ENCODE measurements at regions of chr12 and their contacts with region 1.

Region 1: DNA sequence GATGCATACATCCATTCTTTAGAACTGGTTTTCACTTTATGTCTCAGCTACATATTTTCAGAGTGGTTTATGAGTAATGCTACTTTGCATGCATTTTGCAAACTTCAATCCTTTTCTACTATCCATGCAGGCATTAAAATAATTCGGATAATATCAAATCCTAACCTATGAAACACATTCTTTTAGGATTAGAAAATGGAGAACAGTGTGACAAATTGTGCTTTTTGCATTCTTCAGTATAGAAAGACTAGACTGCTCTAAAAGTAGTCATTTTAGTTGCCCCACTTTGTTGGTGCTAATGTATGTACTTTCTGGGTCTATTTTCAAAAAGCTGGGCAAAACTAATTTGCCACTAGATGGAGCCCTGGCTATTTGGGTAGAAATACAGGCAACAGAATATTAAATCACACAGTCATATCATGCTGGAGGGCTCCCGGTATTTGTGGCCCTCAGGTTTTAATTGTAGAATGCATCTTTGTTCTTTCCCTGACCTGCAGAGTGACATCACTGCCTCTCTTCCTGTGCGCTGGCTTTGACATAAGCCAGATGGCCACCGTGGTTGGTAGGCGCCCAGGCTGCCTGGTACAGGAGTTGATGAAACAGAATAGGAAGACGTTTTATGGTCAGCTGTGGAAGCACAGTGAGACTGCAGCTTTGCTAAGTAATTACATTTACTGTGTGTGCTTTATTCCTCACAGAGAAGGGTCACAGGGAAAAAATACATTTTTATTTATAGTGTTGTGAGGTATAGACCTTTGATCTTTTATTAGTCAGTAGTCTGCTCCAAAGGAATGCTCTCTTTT is 28.1 kb downstream of the MSRB3 start:
- DNase-seq: peak; percentile 93
- H3K4me3 ChIP-seq: no peak overlapping the region
- H3K27ac ChIP-seq: peak overlapping the region; percentile 21 to 77 (median 69)
- H3K4me1 ChIP-seq: peaks cover 0 to 82% (median 61%) of the 10 kb centered on the region in 4 donors
- H3K27me3 ChIP-seq: no peaks in the 10 kb centered on the region
- CTCF ChIP-seq: peak in 3 of 4 experiments; percentile 16 to 28 (median 20)
- EP300 ChIP-seq: peak in 1 of 4 donors; percentile 81
- POLR2A ChIP-seq: no peak

Region 2: GRCh38 chr12:64864319-64864718 is 442.2 kb before region 1 on chr12:
- intact Hi-C with region 1: no loop called
- DNase-seq: no peak
- H3K4me3 ChIP-seq: no peak overlapping the region
- H3K27ac ChIP-seq: no peak overlapping the region
- H3K4me1 ChIP-seq: no peaks in the 10 kb centered on the region
- H3K27me3 ChIP-seq: no peaks in the 10 kb centered on the region
- CTCF ChIP-seq: no peak
- EP300 ChIP-seq: no peak
- POLR2A ChIP-seq: no peak

Region 3: DNA sequence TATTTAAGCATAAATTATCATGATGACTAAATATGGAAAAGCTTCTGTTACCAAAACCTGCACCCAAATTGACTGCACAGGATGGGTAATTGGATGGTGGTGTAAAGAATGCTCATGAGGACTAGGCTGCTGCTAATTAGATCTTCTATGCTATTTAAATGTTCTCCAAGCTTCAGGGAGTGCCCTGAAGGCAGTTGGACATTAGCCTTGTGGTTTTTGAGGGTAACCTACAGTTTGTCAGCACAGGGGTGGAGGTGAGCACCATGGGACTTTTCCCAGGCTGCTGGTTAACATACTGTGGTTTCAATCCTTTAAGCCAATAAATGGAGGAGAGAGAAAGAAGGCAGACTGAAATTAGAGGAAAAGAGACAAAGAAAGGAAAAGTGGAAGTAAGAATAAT is 330.4 kb before region 1 on chr12:
- intact Hi-C with region 1: no loop called
- DNase-seq: no peak
- H3K4me3 ChIP-seq: no peak overlapping the region
- H3K27ac ChIP-seq: no peak overlapping the region
- H3K4me1 ChIP-seq: no peaks in the 10 kb centered on the region
- H3K27me3 ChIP-seq: no peaks in the 10 kb centered on the region
- CTCF ChIP-seq: no peak
- EP300 ChIP-seq: no peak
- POLR2A ChIP-seq: no peak

Region 4: GRCh38 chr12:65022960-65023359 is 283.6 kb before region 1 on chr12:
- intact Hi-C with region 1: no loop called
- DNase-seq: no peak
- H3K4me3 ChIP-seq: no peak overlapping the region
- H3K27ac ChIP-seq: no peak overlapping the region
- H3K4me1 ChIP-seq: no peaks in the 10 kb centered on the region
- H3K27me3 ChIP-seq: no peaks in the 10 kb centered on the region
- CTCF ChIP-seq: no peak
- EP300 ChIP-seq: no peak
- POLR2A ChIP-seq: no peak

Region 5: GRCh38 chr12:65536876-65537661 is 230.5 kb after region 1 on chr12:
- intact Hi-C with region 1: loop called (anchors 10 kb)
- DNase-seq: peak; percentile 81
- H3K4me3 ChIP-seq: no peak overlapping the region
- H3K27ac ChIP-seq: peak overlapping the region; percentile 9 to 68 (median 61)
- H3K4me1 ChIP-seq: peaks cover 0 to 17% (median 9%) of the 10 kb centered on the region in 4 donors
- H3K27me3 ChIP-seq: no peaks in the 10 kb centered on the region
- CTCF ChIP-seq: no peak
- EP300 ChIP-seq: peak; percentile 74 to 95 (median 88)
- POLR2A ChIP-seq: no peak

Measured in sigmoid colon (tissue), 7 donors.